Transverse colon (tissue), 4 donors: ENCODE measurements at regions of chr14 and their contacts with region 1.

Region 1: GRCh38 chr14:62126879-62127478 is 364.8 kb downstream of the SNAPC1 start:
- DNase-seq: no peak
- H3K4me3 ChIP-seq: no peak overlapping the region
- H3K27ac ChIP-seq: no peak overlapping the region
- H3K4me1 ChIP-seq: no peaks in the 10 kb centered on the region
- H3K27me3 ChIP-seq: peaks cover 45% of the 10 kb centered on the region
- CTCF ChIP-seq: peak; percentile 61 to 72 (median 70)
- EP300 ChIP-seq: no peak
- POLR2A ChIP-seq: no peak

Region 2: GRCh38 chr14:61894452-61895077 is 232.4 kb before region 1 on chr14:
- in situ Hi-C with region 1: loop called in 2 of 4 experiments (anchors 10 to 25 kb)
- intact Hi-C with region 1: no loop called
- DNase-seq: peak; percentile 60
- H3K4me3 ChIP-seq: no peak overlapping the region
- H3K27ac ChIP-seq: no peak overlapping the region
- H3K4me1 ChIP-seq: no peaks in the 10 kb centered on the region
- H3K27me3 ChIP-seq: no peaks in the 10 kb centered on the region
- CTCF ChIP-seq: peak; percentile 39 to 57 (median 53)
- EP300 ChIP-seq: no peak
- POLR2A ChIP-seq: no peak

Region 3: GRCh38 chr14:61904181-61904580 is 222.8 kb before region 1 on chr14:
- in situ Hi-C with region 1: loop called in 3 of 4 experiments (anchors 10 to 25 kb)
- intact Hi-C with region 1: no loop called
- DNase-seq: no peak
- H3K4me3 ChIP-seq: no peak overlapping the region
- H3K27ac ChIP-seq: no peak overlapping the region
- H3K4me1 ChIP-seq: no peaks in the 10 kb centered on the region
- H3K27me3 ChIP-seq: no peaks in the 10 kb centered on the region
- CTCF ChIP-seq: no peak
- EP300 ChIP-seq: no peak
- POLR2A ChIP-seq: no peak

Region 4: GRCh38 chr14:62064751-62065323 is 62.1 kb before region 1 on chr14:
- in situ Hi-C with region 1: no loop called
- intact Hi-C with region 1: no loop called
- DNase-seq: no peak
- H3K4me3 ChIP-seq: no peak overlapping the region
- H3K27ac ChIP-seq: no peak overlapping the region
- H3K4me1 ChIP-seq: no peaks in the 10 kb centered on the region
- H3K27me3 ChIP-seq: peaks cover 4% of the 10 kb centered on the region
- CTCF ChIP-seq: no peak
- EP300 ChIP-seq: no peak
- POLR2A ChIP-seq: no peak